A549 (cell line): ENCODE measurements at regions of chr9 and their contacts with region 1.

Region 1: GRCh38 chr9:69056191-69056815 is 20.8 kb downstream of the FXN start:
- DNase-seq: no peak
- ATAC-seq: no peak
- H3K4me3 ChIP-seq: no peak overlapping the region
- H3K27ac ChIP-seq: no peak overlapping the region
- H3K4me1 ChIP-seq: no peaks in the 10 kb centered on the region
- CTCF ChIP-seq: no peak
- EP300 ChIP-seq: no peak
- POLR2A ChIP-seq: no peak
- RAD21 ChIP-seq: no peak

Region 2: GRCh38 chr9:68755752-68756151 is 300.6 kb before region 1 on chr9:
- CTCF ChIA-PET with region 1: no interaction called
- POLR2A ChIA-PET with region 1: no interaction called
- DNase-seq: no peak
- ATAC-seq: no peak
- H3K4me3 ChIP-seq: no peak overlapping the region
- H3K27ac ChIP-seq: no peak overlapping the region
- H3K4me1 ChIP-seq: no peaks in the 10 kb centered on the region
- CTCF ChIP-seq: no peak
- EP300 ChIP-seq: no peak
- POLR2A ChIP-seq: no peak
- RAD21 ChIP-seq: no peak

Region 3: GRCh38 chr9:69066955-69067354 is 10.7 kb after region 1 on chr9:
- CTCF ChIA-PET with region 1: interaction called, 18 read pairs
- POLR2A ChIA-PET with region 1: interaction called, 6 read pairs
- DNase-seq: no peak
- ATAC-seq: no peak; a peak in 1 of 6 replicates
- H3K4me3 ChIP-seq: no peak overlapping the region
- H3K27ac ChIP-seq: no peak overlapping the region
- H3K4me1 ChIP-seq: no peaks in the 10 kb centered on the region
- CTCF ChIP-seq: no peak
- EP300 ChIP-seq: no peak
- POLR2A ChIP-seq: no peak
- RAD21 ChIP-seq: no peak

Region 4: GRCh38 chr9:69078581-69078980 is 22.3 kb after region 1 on chr9:
- CTCF ChIA-PET with region 1: interaction called, 23 read pairs
- POLR2A ChIA-PET with region 1: no interaction called
- DNase-seq: no peak
- ATAC-seq: no peak; a peak in 1 of 6 replicates
- H3K4me3 ChIP-seq: no peak overlapping the region
- H3K27ac ChIP-seq: no peak overlapping the region
- H3K4me1 ChIP-seq: no peaks in the 10 kb centered on the region
- CTCF ChIP-seq: no peak
- EP300 ChIP-seq: no peak
- POLR2A ChIP-seq: no peak
- RAD21 ChIP-seq: no peak

Region 5: DNA sequence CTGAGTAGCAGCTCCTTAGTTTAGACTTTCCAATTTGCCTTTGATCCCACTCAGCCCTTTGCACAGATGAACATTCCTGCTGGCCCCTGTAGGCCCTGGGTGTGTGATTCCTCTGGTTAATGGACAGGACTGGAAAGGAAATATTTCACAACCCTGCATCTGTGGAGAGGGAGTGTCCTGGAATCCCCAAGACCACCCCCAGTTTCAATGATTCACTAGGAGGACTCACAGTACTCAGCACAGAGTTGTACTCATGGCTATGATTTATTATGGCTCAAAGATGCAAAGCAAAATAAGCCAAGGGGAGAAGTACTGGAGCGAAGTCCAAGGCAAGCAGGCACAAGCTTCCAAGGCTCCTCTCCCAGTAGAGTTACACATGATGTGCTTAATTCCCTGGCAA is 75.4 kb after region 1 on chr9:
- CTCF ChIA-PET with region 1: no interaction called
- POLR2A ChIA-PET with region 1: no interaction called
- DNase-seq: peak in 1 of 2 experiments; percentile 26
- ATAC-seq: peak; percentile 50 to 73; a peak in 5 of 6 replicates
- H3K4me3 ChIP-seq: no peak overlapping the region
- H3K27ac ChIP-seq: no peak overlapping the region
- H3K4me1 ChIP-seq: peaks cover 16% of the 10 kb centered on the region; the same call in 2 of the 3 replicates
- CTCF ChIP-seq: no peak
- EP300 ChIP-seq: no peak
- POLR2A ChIP-seq: no peak
- RAD21 ChIP-seq: no peak

Region 6: GRCh38 chr9:69186841-69187611 is 130.7 kb after region 1 on chr9:
- CTCF ChIA-PET with region 1: interaction called, 237 read pairs
- POLR2A ChIA-PET with region 1: interaction called, 4 read pairs
- DNase-seq: no peak
- ATAC-seq: no peak
- H3K4me3 ChIP-seq: no peak overlapping the region
- H3K27ac ChIP-seq: no peak overlapping the region
- H3K4me1 ChIP-seq: no peaks in the 10 kb centered on the region
- CTCF ChIP-seq: no peak
- EP300 ChIP-seq: no peak
- POLR2A ChIP-seq: no peak
- RAD21 ChIP-seq: no peak

Region 7: GRCh38 chr9:69199769-69200470 is 143.6 kb after region 1 on chr9:
- CTCF ChIA-PET with region 1: interaction called, 237 read pairs
- POLR2A ChIA-PET with region 1: no interaction called
- DNase-seq: no peak
- ATAC-seq: no peak
- H3K4me3 ChIP-seq: no peak overlapping the region
- H3K27ac ChIP-seq: no peak overlapping the region
- H3K4me1 ChIP-seq: no peaks in the 10 kb centered on the region
- CTCF ChIP-seq: no peak
- EP300 ChIP-seq: no peak
- POLR2A ChIP-seq: no peak
- RAD21 ChIP-seq: no peak